Heart left ventricle (tissue), 16 donors: ENCODE measurements at regions of chr1 and their contacts with region 1.

Region 1: DNA sequence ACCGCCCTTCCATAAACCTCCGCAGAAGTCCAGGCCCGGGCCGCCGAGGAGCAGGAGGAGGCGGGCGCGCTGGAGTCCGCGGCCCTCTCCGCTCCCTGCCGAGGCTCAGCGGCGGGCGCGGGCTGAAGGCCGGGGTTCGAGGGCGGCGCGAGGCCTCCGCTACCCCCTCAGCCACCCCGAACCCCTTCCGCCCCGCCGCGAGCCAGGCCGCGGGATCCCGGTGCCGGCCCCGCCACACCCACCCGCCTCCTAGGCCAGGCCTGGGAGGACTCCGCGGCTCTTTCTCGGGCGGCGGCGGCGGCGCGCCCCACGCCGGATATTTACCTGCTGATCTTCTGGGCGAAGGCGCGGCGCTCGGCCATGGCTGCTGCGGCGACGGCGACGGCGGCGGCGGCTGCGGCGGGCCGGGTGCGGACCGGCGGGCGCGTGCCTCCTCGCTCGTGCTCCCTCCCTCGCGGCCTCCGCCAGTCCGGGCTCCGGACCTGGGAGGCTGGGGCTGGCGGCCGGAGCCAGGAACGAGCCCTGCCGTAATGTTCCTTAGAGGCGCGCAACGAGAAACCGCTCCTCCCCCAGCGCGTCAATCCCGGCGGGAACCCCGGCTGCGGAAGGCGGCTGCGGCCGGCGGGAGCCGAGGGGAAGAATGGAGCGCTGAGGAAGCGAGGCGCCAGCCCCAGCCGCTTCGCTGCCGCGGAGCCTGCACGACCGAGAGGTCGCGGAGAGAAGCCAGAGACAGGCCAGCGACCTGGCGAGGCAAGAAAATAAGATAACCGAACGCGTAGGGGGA is at the start of gene DOCK7:
- DNase-seq: peak; percentile 74 to 89 (median 83)
- ATAC-seq: peak; percentile 63 to 94 (median 88)
- H3K4me3 ChIP-seq: peak within 1 kb of the TSS; percentile 48 to 99 (median 88)
- H3K27ac ChIP-seq: peak within 1 kb of the TSS; percentile 47 to 87 (median 76)
- H3K4me1 ChIP-seq: peaks cover 0 to 55% (median 30%) of the 10 kb centered on the region in 12 donors
- H3K27me3 ChIP-seq: no peaks in the 10 kb centered on the region
- CTCF ChIP-seq: no peak
- POLR2A ChIP-seq: peak in 1 of 2 donors; percentile 26
- total RNA-seq, gene DOCK7: 5.8 to 26.7 (median 12.0) TPM

Region 2: GRCh38 chr1:62295921-62296491 is 392.1 kb before region 1 on chr1:
- intact Hi-C with region 1: no loop called
- DNase-seq: no peak
- ATAC-seq: peak in 1 of 4 donors; percentile 7
- H3K4me3 ChIP-seq: peak overlapping the region in 1 of 12 donors; percentile 5
- H3K27ac ChIP-seq: peak overlapping the region in 1 of 12 donors; percentile 22
- H3K4me1 ChIP-seq: peaks cover 0 to 39% (median 14%) of the 10 kb centered on the region in 12 donors
- H3K27me3 ChIP-seq: peaks cover 0 to 9% (median 0%) of the 10 kb centered on the region in 9 donors
- CTCF ChIP-seq: no peak
- POLR2A ChIP-seq: no peak

Region 3: DNA sequence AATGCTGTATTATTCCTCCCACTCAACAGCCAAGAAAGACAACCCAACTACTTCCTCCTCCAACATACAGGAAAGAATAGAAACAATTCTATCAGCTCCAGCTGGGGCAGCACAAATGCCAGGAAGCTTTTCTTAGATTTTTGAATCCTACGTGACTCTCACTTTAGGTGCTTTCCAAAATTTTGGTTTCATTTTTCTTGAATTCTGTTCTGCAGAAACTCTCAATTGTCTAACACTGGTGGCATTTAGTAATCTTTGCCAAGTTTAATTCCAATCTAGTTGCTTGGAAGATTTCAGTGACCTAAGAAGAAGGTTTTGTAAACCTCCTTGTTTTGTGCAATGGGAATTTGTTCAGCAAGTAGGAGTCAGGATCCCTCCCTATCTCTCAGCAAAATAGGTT is 37.2 kb after region 1 on chr1:
- intact Hi-C with region 1: loop called in 1 of 10 experiments (anchors 5 kb)
- DNase-seq: no peak
- ATAC-seq: peak in 3 of 4 donors; percentile 31 to 43 (median 33)
- H3K4me3 ChIP-seq: peak overlapping the region in 4 of 12 donors; percentile 0 to 10 (median 6)
- H3K27ac ChIP-seq: peak overlapping the region in 2 of 12 donors; percentile 7 to 70
- H3K4me1 ChIP-seq: peaks cover 0 to 45% (median 16%) of the 10 kb centered on the region in 12 donors
- H3K27me3 ChIP-seq: peaks cover 0 to 15% (median 0%) of the 10 kb centered on the region in 9 donors
- CTCF ChIP-seq: no peak
- POLR2A ChIP-seq: no peak